ENCODE measurements at regions of chr1 and their contacts with region 1.

Region 1: GRCh38 chr1:151673407-151673806 is 43.2 kb downstream of the CELF3 start:
- DNase-seq: no peak

Region 2: DNA sequence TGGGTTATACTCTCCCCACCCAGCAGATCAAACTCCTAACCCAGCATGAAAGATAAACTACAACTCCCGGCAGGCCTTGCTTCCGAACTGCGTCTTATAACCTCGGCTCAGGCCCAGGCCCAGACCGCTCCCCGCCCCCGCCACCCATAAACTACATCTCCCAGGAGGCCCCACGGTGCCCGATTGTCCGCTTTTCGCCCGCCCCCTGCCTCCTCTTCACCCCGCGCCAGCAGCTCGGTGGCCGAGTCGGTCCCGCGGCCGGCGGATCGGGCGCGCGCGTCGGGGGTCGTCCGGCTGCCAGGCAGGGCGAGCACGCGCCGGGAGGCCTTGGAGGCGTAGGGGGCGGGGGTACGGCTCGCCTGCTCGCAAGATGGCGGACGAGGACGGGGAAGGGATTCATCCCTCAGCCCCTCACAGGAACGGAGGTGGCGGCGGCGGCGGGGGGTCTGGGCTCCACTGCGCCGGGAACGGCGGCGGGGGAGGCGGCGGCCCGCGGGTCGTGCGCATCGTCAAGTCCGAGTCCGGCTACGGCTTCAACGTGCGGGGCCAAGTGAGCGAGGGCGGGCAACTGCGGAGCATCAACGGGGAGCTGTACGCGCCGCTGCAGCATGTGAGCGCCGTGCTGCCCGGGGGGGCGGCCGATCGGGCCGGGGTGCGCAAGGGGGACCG is 61.4 kb before region 1 on chr1 and contains the start of gene SNX27:
- intact Hi-C with region 1: loop called in 1 of 2 experiments (anchors 10 kb)
- DNase-seq: peak; percentile 96
- total RNA-seq, gene SNX27: 40.1 to 41.9 TPM

Region 3: DNA sequence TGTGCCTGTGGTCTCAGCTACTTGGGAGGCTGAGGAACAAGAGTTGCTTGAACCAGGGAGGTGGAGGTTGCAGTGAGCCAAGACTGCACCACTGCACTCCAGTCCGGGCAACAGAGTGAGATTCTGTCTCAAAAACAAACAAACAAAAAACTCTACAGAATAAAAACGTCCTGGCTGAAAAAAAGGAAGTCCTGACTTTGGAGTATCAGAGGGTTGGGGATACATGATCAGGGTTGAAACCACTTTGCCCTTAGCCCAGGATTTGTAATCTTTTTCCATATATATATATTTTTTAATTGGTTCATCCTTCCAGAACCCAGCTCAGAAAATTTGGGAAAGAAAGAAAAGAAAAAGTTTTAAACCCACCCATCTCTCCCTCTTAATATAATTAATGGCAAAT is 229.5 kb after region 1 on chr1:
- intact Hi-C with region 1: loop called in 1 of 2 experiments (anchors 5 kb)
- DNase-seq: no peak

Measured in posterior vena cava (tissue), 2 donors.